Psoas muscle (tissue), 8 donors: ENCODE measurements at regions of chr3 and their contacts with region 1.

Region 1: DNA sequence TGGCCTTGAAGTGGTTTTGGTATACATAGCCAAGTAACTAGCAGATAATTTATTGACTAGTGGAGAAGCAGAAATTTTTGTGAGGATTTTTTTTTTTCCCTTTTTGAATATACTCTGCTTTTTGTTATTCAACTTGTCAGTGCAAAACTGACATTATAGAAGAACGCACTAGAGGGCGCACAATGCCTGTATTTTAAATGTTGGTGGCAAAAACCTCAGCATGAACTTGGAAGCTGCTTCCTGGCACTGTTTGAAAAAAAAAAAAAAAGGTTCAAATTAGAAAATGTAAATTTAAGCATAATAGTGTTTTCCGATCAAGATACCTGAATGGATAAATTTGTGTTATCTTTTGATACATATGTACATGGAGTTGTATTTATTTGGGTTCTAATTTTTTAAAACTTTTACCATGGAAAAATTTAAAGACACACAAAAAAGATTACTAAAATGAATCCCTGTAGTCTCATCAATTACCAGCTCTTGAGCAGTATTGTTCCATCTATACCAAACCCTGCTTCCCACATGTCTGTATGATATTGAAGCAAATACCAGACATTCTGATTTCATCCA is 56.0 kb downstream of the SLC25A26 start:
- DNase-seq: no peak
- ATAC-seq: peak in 3 of 4 donors; percentile 51 to 89 (median 74)
- H3K4me3 ChIP-seq: no peak overlapping the region
- H3K27ac ChIP-seq: no peak overlapping the region
- H3K4me1 ChIP-seq: peaks cover 11% of the 10 kb centered on the region
- H3K27me3 ChIP-seq: no peaks in the 10 kb centered on the region
- CTCF ChIP-seq: peak; percentile 74

Region 2: GRCh38 chr3:66165660-66166059 is 111.1 kb before region 1 on chr3:
- intact Hi-C with region 1: no loop called
- DNase-seq: no peak
- ATAC-seq: no peak
- H3K4me3 ChIP-seq: no peak overlapping the region
- H3K27ac ChIP-seq: no peak overlapping the region
- H3K4me1 ChIP-seq: no peaks in the 10 kb centered on the region
- H3K27me3 ChIP-seq: peaks cover 0 to 2% (median 0%) of the 10 kb centered on the region in 3 donors
- CTCF ChIP-seq: no peak

Region 3: DNA sequence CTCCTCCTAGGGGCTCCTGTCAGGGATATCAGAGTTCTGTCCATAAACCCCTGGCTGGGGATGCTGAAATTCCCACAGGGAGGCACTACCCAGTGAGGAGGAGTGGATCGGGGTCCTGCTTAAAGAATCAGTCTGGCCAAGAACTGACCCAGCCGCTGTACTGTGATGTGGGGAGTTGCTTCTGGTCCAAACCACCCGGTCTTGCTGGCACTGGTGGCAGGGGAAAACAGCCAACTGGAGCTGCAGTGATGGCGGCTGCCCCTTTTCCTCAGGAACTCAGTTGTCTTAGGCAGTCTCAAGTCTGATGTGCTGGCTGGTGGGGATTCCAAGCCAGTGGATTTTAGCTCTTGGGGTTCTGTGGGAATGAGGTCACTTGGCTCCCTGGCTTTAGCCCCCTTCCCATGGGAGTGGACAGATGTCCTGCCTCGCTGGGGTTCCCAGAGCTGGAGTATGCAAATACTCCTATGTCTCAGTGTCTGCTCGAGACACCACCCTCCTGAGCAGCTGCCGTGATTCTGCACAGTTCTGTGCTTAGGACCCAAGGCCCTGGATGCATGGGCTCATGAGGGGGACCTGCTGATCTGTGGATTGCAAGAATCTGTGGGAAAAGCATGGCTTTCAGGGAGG is 41.1 kb after region 1 on chr3:
- intact Hi-C with region 1: no loop called
- DNase-seq: no peak
- ATAC-seq: peak in 1 of 4 donors; percentile 33
- H3K4me3 ChIP-seq: no peak overlapping the region
- H3K27ac ChIP-seq: no peak overlapping the region
- H3K4me1 ChIP-seq: peaks cover 7% of the 10 kb centered on the region
- H3K27me3 ChIP-seq: no peaks in the 10 kb centered on the region
- CTCF ChIP-seq: no peak

Region 4: DNA sequence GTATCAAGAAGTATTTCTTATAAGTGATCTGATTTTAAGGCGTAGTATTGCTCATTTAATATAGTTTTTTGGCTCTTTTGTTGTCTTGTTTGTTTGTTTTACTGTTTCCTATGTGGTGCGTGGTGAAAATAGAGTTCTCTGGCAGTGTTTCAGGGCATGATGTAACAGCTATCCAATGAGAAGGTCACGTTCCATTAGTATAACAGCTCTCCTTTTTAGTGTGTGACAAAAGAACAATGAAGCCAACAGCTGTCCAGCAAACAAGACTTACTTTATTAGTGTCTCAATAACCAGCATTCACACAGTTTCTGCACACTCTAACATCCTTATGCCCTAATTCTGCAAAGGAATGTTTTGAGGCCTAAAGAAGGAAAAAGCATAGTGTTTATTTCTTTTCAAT is 71.9 kb after region 1 on chr3:
- intact Hi-C with region 1: no loop called
- DNase-seq: no peak
- ATAC-seq: peak; percentile 68 to 95 (median 88)
- H3K4me3 ChIP-seq: no peak overlapping the region
- H3K27ac ChIP-seq: no peak overlapping the region
- H3K4me1 ChIP-seq: peaks cover 11% of the 10 kb centered on the region
- H3K27me3 ChIP-seq: no peaks in the 10 kb centered on the region
- CTCF ChIP-seq: no peak

Region 5: GRCh38 chr3:66372681-66373350 is 96.0 kb after region 1 on chr3:
- intact Hi-C with region 1: loop called (anchors 2 to 5 kb)
- DNase-seq: no peak
- ATAC-seq: peak; percentile 62 to 77 (median 69)
- H3K4me3 ChIP-seq: no peak overlapping the region
- H3K27ac ChIP-seq: no peak overlapping the region
- H3K4me1 ChIP-seq: peaks cover 18% of the 10 kb centered on the region
- H3K27me3 ChIP-seq: no peaks in the 10 kb centered on the region
- CTCF ChIP-seq: peak; percentile 31

Region 6: GRCh38 chr3:66397745-66398144 is 121.0 kb after region 1 on chr3:
- intact Hi-C with region 1: loop called in 1 of 2 experiments (anchors 1 kb)
- DNase-seq: peak in 1 of 2 donors; percentile 39
- ATAC-seq: peak; percentile 70 to 78 (median 73)
- H3K4me3 ChIP-seq: no peak overlapping the region
- H3K27ac ChIP-seq: peak overlapping the region; percentile 88
- H3K4me1 ChIP-seq: peaks cover 63% of the 10 kb centered on the region
- H3K27me3 ChIP-seq: no peaks in the 10 kb centered on the region
- CTCF ChIP-seq: no peak

Region 7: DNA sequence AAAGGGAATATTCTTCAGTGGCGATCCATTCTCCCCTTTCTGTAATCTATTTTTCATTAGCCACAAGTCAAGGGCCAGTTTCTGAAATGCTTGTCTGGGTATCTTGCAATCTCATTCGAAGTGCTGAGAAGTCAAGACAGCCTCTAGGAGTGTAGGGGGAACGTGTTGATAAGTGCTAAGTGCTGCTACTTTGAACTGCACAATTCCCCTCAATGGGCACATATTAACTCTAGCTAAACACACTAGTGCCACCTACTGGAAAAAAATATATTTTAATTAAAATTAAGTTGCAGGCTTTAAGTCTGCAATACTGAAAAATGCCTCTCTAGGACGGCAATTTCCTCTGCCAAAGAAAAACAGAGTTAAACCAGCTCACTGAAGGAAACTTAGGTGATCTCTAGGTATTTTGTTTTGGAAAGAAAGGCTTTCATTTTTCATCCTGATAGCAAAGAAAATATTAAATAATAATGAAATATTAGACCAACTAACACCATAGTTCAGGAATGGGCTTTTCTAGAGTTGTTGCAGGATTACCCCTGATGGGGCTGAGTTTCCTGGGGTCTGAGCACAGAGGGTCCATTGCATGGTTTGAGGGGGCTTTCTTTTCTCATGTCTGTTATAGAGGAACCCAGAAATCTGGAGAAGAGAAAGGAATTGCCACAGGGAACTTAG is 539.4 kb after region 1 on chr3:
- intact Hi-C with region 1: loop called (anchors 5 kb)
- DNase-seq: no peak
- ATAC-seq: peak; percentile 84 to 95 (median 89)
- H3K4me3 ChIP-seq: no peak overlapping the region
- H3K27ac ChIP-seq: no peak overlapping the region
- H3K4me1 ChIP-seq: no peaks in the 10 kb centered on the region
- H3K27me3 ChIP-seq: no peaks in the 10 kb centered on the region
- CTCF ChIP-seq: peak; percentile 72

Region 8: GRCh38 chr3:66822186-66823008 is 545.6 kb after region 1 on chr3:
- intact Hi-C with region 1: loop called (anchors 5 kb)
- DNase-seq: peak; percentile 22 to 66
- ATAC-seq: peak; percentile 83 to 95 (median 88)
- H3K4me3 ChIP-seq: no peak overlapping the region
- H3K27ac ChIP-seq: no peak overlapping the region
- H3K4me1 ChIP-seq: no peaks in the 10 kb centered on the region
- H3K27me3 ChIP-seq: no peaks in the 10 kb centered on the region
- CTCF ChIP-seq: peak; percentile 77